Naive thymus-derived CD4-positive, alpha-beta T cell (primary cell): ENCODE measurements at regions of chr11 and their contacts with region 1.

Region 1: GRCh38 chr11:35391922-35392813 is 27.2 kb downstream of the SLC1A2 start:
- DNase-seq: peak; percentile 70 to 93 (median 82)
- ATAC-seq: peak; percentile 93
- H3K4me3 ChIP-seq: no peak overlapping the region
- H3K4me3 Mint-ChIP-seq: peak overlapping the region; percentile 13 to 78 (median 63)
- H3K27ac ChIP-seq: no peak overlapping the region
- H3K27ac Mint-ChIP-seq: peak overlapping the region in 6 of 9 donors; percentile 25 to 86 (median 59)
- H3K4me1 ChIP-seq: peaks cover 0 to 17% of the 10 kb centered on the region in 2 donors
- H3K4me1 Mint-ChIP-seq: peaks cover 8 to 35% (median 30%) of the 10 kb centered on the region in 7 donors
- H3K27me3 ChIP-seq: no peaks in the 10 kb centered on the region
- H3K27me3 Mint-ChIP-seq: peaks cover 0 to 19% (median 0%) of the 10 kb centered on the region in 5 donors

Region 2: DNA sequence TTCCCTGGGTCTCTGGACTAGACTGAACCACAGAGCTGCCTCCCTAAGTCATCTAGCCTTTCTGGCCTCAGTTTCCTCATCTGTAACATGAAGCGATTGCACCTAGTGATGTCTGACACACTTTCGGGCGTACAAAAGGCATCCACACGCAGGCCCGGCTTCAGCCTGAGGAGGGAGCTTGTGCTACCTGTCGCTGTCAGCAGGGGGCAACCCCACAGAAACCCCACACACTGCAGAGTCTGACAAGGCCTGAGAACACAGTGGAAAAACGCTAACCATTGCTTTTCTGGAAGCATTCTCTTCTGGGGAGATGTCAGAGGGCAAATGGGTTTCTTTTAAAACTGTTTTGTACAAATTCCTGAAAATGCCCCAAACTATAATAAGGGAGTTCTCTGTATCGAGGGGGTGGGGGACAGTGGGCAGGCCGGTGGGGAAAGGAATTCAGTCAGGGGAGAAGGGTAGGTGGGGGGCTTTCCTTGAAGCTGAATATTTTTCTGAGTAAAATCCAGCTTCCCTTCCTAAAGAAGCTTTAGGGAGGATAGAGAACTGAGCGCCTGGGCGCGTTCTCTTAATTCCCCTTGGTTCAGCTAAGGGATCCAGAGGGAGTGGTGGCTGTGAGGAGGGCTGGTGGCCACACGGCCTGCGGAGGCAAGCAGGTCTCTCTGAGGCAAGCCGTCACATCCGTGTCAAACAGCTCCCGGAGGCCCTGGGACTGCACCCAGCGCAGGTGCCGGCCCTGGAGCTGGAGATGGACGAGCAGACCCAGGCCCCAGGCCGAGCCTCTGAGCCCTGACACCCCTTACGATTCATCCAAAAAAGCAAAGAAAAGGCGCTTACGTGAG is 879.1 kb before region 1 on chr11:
- CTCF ChIA-PET with region 1: interaction called, 3 read pairs
- POLR2A ChIA-PET with region 1: no interaction called
- intact Hi-C with region 1: loop called (anchors 1 kb)
- DNase-seq: peak in 8 of 9 donors; percentile 3 to 37 (median 25)
- ATAC-seq: peak; percentile 82
- H3K4me3 ChIP-seq: no peak overlapping the region
- H3K4me3 Mint-ChIP-seq: no peak overlapping the region
- H3K27ac ChIP-seq: no peak overlapping the region
- H3K27ac Mint-ChIP-seq: no peak overlapping the region
- H3K4me1 ChIP-seq: no peaks in the 10 kb centered on the region
- H3K4me1 Mint-ChIP-seq: peaks cover 0 to 2% (median 0%) of the 10 kb centered on the region in 7 donors
- H3K27me3 ChIP-seq: no peaks in the 10 kb centered on the region
- H3K27me3 Mint-ChIP-seq: peaks cover 0 to 13% (median 0%) of the 10 kb centered on the region in 5 donors

Region 3: GRCh38 chr11:34840736-34841386 is 551.3 kb before region 1 on chr11:
- CTCF ChIA-PET with region 1: interaction called, 3 read pairs
- POLR2A ChIA-PET with region 1: no interaction called
- intact Hi-C with region 1: loop called (anchors 1 to 2 kb)
- DNase-seq: peak in 5 of 9 donors; percentile 4 to 16 (median 8)
- ATAC-seq: peak; percentile 87
- H3K4me3 ChIP-seq: no peak overlapping the region
- H3K4me3 Mint-ChIP-seq: no peak overlapping the region
- H3K27ac ChIP-seq: no peak overlapping the region
- H3K27ac Mint-ChIP-seq: no peak overlapping the region
- H3K4me1 ChIP-seq: no peaks in the 10 kb centered on the region
- H3K4me1 Mint-ChIP-seq: no peaks in the 10 kb centered on the region
- H3K27me3 ChIP-seq: no peaks in the 10 kb centered on the region
- H3K27me3 Mint-ChIP-seq: peaks cover 12 to 33% (median 30%) of the 10 kb centered on the region in 5 donors

Region 4: GRCh38 chr11:34997952-34998528 is 394.1 kb before region 1 on chr11:
- CTCF ChIA-PET with region 1: interaction called, 13 read pairs
- POLR2A ChIA-PET with region 1: interaction called, 4 read pairs
- intact Hi-C with region 1: loop called (anchors 1 kb)
- DNase-seq: peak in 6 of 9 donors; percentile 27 to 54 (median 44)
- ATAC-seq: peak; percentile 72
- H3K4me3 ChIP-seq: no peak overlapping the region
- H3K4me3 Mint-ChIP-seq: peak overlapping the region in 9 of 10 donors; percentile 6 to 81 (median 34)
- H3K27ac ChIP-seq: peak overlapping the region; percentile 8
- H3K27ac Mint-ChIP-seq: peak overlapping the region; percentile 15 to 90 (median 69)
- H3K4me1 ChIP-seq: peaks cover 15 to 19% of the 10 kb centered on the region in 2 donors
- H3K4me1 Mint-ChIP-seq: peaks cover 19 to 38% (median 35%) of the 10 kb centered on the region in 7 donors
- H3K27me3 ChIP-seq: no peaks in the 10 kb centered on the region
- H3K27me3 Mint-ChIP-seq: no peaks in the 10 kb centered on the region

Region 5: GRCh38 chr11:35144136-35144741 is 247.9 kb before region 1 on chr11:
- CTCF ChIA-PET with region 1: interaction called, 3 read pairs
- POLR2A ChIA-PET with region 1: interaction called, 3 read pairs
- intact Hi-C with region 1: loop called (anchors 1 kb)
- DNase-seq: peak in 8 of 9 donors; percentile 59 to 85 (median 74)
- ATAC-seq: peak; percentile 59
- H3K4me3 ChIP-seq: peak overlapping the region; percentile 97
- H3K4me3 Mint-ChIP-seq: peak overlapping the region; percentile 83 to 99 (median 94)
- H3K27ac ChIP-seq: peak overlapping the region; percentile 88
- H3K27ac Mint-ChIP-seq: peak overlapping the region; percentile 79 to 100 (median 92)
- H3K4me1 ChIP-seq: peaks cover 68 to 74% of the 10 kb centered on the region in 2 donors
- H3K4me1 Mint-ChIP-seq: peaks cover 62 to 83% (median 77%) of the 10 kb centered on the region in 7 donors
- H3K27me3 ChIP-seq: no peaks in the 10 kb centered on the region
- H3K27me3 Mint-ChIP-seq: no peaks in the 10 kb centered on the region

Region 6: DNA sequence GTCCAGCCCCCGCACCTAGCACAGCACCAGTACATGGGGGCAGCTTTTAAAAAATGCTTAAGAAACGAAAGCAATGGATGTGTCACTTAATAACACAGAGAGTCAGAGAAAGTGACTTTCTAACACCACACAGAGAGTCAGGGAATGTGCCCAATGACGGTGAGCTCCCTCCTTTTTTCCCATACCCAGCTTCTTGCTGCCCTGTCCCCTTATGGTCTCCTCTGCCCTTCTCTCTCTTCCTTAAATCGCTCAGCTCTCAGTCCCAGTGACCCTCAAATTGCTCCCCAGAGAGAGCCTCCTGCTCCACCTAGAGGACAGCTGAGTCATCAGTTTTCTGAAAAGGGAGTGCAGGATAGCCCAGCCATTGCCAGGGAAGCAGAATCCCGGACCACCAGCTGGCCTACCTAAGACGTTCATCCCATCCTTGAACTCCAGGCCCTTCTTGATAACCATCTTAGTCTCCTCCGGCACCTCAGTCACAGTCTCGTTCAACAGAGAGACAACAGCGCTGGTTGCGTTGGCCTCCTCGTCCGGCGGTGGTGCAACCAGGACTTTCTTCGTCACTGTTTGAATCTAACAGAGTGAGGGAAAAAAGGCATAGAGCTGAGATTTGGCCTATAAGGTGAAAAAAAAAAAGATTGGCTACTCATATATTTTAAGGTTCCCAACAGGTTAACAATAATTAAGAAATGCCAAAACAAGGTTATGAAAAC is 86.3 kb before region 1 on chr11:
- CTCF ChIA-PET with region 1: interaction called, 10 read pairs
- POLR2A ChIA-PET with region 1: no interaction called
- intact Hi-C with region 1: loop called in 1 of 2 experiments (anchors 1 kb)
- DNase-seq: peak in 7 of 9 donors; percentile 20 to 57 (median 53)
- ATAC-seq: peak; percentile 55
- H3K4me3 ChIP-seq: no peak overlapping the region
- H3K4me3 Mint-ChIP-seq: peak overlapping the region; percentile 6 to 84 (median 77)
- H3K27ac ChIP-seq: peak overlapping the region; percentile 16
- H3K27ac Mint-ChIP-seq: peak overlapping the region; percentile 19 to 96 (median 86)
- H3K4me1 ChIP-seq: peaks cover 0 to 14% of the 10 kb centered on the region in 2 donors
- H3K4me1 Mint-ChIP-seq: peaks cover 16 to 42% (median 31%) of the 10 kb centered on the region in 7 donors
- H3K27me3 ChIP-seq: no peaks in the 10 kb centered on the region
- H3K27me3 Mint-ChIP-seq: peaks cover 0 to 14% (median 0%) of the 10 kb centered on the region in 5 donors

Region 7: DNA sequence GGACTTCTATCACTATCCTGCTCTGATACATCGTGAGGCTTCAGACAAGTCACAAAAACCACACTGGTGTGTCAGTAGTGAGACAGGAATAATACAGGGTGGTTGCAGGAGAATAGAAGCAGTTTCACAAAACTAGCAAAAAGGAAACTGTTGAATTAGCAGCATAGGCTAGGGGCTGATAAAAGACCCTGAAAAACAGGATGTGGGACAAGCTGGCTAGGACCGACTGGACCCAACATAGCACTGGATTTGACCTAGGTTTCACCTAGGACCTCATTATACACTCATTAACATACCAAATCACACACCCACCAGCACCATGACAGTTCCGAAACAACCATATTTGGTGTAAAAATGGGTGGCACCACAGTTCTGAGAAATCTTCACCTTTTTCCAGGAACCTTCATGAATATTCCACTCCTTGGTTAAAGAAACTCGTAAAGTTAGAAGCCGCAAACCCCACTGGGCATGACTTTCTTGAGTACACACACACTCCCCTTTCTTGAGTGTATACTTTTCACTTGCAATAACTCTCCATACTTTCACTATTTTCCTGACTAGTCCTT is 49.1 kb before region 1 on chr11:
- CTCF ChIA-PET with region 1: no interaction called
- POLR2A ChIA-PET with region 1: no interaction called
- intact Hi-C with region 1: loop called in 1 of 2 experiments (anchors 1 kb)
- DNase-seq: peak in 8 of 9 donors; percentile 19 to 69 (median 54)
- ATAC-seq: peak; percentile 62
- H3K4me3 ChIP-seq: no peak overlapping the region
- H3K4me3 Mint-ChIP-seq: peak overlapping the region; percentile 33 to 82 (median 66)
- H3K27ac ChIP-seq: peak overlapping the region; percentile 2
- H3K27ac Mint-ChIP-seq: peak overlapping the region; percentile 82 to 91 (median 85)
- H3K4me1 ChIP-seq: peaks cover 3 to 43% of the 10 kb centered on the region in 2 donors
- H3K4me1 Mint-ChIP-seq: peaks cover 29 to 80% (median 59%) of the 10 kb centered on the region in 7 donors
- H3K27me3 ChIP-seq: no peaks in the 10 kb centered on the region
- H3K27me3 Mint-ChIP-seq: peaks cover 0 to 2% (median 0%) of the 10 kb centered on the region in 5 donors